ENCODE measurements at regions of chr2 and their contacts with region 1.

Region 1: GRCh38 chr2:101725515-101726192 is 28.1 kb downstream of the MAP4K4 start:
- DNase-seq: no peak
- H3K4me3 Mint-ChIP-seq: no peak overlapping the region
- H3K27ac Mint-ChIP-seq: no peak overlapping the region
- H3K4me1 Mint-ChIP-seq: peaks cover 95% of the 10 kb centered on the region
- H3K27me3 Mint-ChIP-seq: no peaks in the 10 kb centered on the region

Region 2: GRCh38 chr2:101710471-101711318 is 15.0 kb before region 1 on chr2:
- CTCF ChIA-PET with region 1: interaction called, 16 read pairs
- DNase-seq: no peak
- H3K4me3 Mint-ChIP-seq: no peak overlapping the region
- H3K27ac Mint-ChIP-seq: peak overlapping the region; percentile 60
- H3K4me1 Mint-ChIP-seq: peaks cover 75% of the 10 kb centered on the region
- H3K27me3 Mint-ChIP-seq: no peaks in the 10 kb centered on the region

Region 3: GRCh38 chr2:102063941-102064678 is 338.5 kb after region 1 on chr2:
- CTCF ChIA-PET with region 1: no interaction called
- DNase-seq: no peak
- H3K4me3 Mint-ChIP-seq: no peak overlapping the region
- H3K27ac Mint-ChIP-seq: no peak overlapping the region
- H3K4me1 Mint-ChIP-seq: peaks cover 21% of the 10 kb centered on the region
- H3K27me3 Mint-ChIP-seq: no peaks in the 10 kb centered on the region